Uterus (tissue), 4 donors: ENCODE measurements at regions of chr5 and their contacts with region 1.

Region 1: GRCh38 chr5:180950291-180950949 is 38.2 kb upstream of the BTNL3 start:
- DNase-seq: no peak
- H3K4me3 ChIP-seq: no peak overlapping the region
- H3K27ac ChIP-seq: no peak overlapping the region
- H3K4me1 ChIP-seq: no peaks in the 10 kb centered on the region
- H3K27me3 ChIP-seq: no peaks in the 10 kb centered on the region
- CTCF ChIP-seq: no peak
- POLR2A ChIP-seq: no peak

Region 2: GRCh38 chr5:180555168-180555921 is 395.1 kb before region 1 on chr5:
- intact Hi-C with region 1: no loop called
- DNase-seq: no peak
- H3K4me3 ChIP-seq: no peak overlapping the region
- H3K27ac ChIP-seq: no peak overlapping the region
- H3K4me1 ChIP-seq: no peaks in the 10 kb centered on the region
- H3K27me3 ChIP-seq: no peaks in the 10 kb centered on the region
- CTCF ChIP-seq: no peak
- POLR2A ChIP-seq: no peak

Region 3: DNA sequence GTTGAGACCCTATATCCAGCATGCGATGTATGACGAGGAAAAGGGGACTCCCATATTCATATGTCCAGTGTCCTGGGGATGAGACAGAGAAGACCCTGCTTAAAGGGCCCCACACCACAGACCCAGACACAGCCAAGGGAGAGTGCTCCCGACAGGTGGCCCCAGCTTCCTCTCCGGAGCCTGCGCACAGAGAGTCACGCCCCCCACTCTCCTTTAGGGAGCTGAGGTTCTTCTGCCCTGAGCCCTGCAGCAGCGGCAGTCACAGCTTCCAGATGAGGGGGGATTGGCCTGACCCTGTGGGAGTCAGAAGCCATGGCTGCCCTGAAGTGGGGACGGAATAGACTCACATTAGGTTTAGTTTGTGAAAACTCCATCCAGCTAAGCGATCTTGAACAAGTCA is 55.4 kb after region 1 on chr5:
- intact Hi-C with region 1: loop called (anchors 2 kb)
- DNase-seq: no peak
- H3K4me3 ChIP-seq: no peak overlapping the region
- H3K27ac ChIP-seq: no peak overlapping the region
- H3K4me1 ChIP-seq: no peaks in the 10 kb centered on the region
- H3K27me3 ChIP-seq: no peaks in the 10 kb centered on the region
- CTCF ChIP-seq: no peak
- POLR2A ChIP-seq: no peak

Region 4: GRCh38 chr5:181121659-181122561 is 171.5 kb after region 1 on chr5:
- intact Hi-C with region 1: no loop called
- DNase-seq: no peak
- H3K4me3 ChIP-seq: no peak overlapping the region
- H3K27ac ChIP-seq: no peak overlapping the region
- H3K4me1 ChIP-seq: no peaks in the 10 kb centered on the region
- H3K27me3 ChIP-seq: peaks cover 0 to 7% of the 10 kb centered on the region in 2 donors
- CTCF ChIP-seq: no peak
- POLR2A ChIP-seq: no peak